Tibial artery (tissue), 4 donors: ENCODE measurements at regions of chr7 and their contacts with region 1.

Region 1: DNA sequence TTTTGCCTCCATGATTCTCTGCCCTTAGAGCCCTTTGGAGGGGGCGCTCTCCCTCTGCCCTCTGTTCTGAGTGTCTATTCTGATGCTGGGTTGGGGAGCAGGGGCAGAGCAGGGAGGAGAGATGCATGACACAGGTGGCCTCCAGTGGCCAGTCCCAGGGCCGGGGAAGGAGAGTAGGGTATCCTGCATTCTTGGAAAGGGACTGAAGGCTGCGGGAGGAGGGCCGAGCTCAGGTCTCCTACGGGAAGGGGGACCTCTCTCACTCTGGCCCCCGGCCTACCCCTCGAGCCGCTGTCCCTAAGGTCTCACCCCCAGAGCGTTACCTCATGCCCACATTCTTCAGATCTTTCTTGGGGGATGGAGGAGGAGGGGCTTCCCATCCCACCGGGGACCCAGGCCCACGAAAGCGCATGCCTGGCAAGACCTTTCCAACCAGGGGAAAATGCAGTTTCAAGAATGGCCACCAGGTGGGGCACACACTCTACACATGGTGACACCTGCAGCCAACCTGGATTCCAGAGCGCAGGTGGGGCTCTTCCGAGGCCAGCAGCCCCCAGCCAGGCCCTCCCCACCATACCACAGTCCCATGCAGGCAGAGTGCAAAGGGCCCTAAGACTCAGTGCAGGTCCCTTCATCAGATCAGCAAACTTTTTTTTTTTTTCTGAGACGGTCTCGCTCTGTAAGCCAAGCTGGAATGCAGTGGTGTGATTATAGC is 86.4 kb downstream of the MYL10 start:
- DNase-seq: peak; percentile 77 to 78
- H3K4me3 ChIP-seq: no peak overlapping the region
- H3K27ac ChIP-seq: no peak overlapping the region
- H3K4me1 ChIP-seq: peaks cover 0 to 9% (median 8%) of the 10 kb centered on the region in 4 donors
- H3K27me3 ChIP-seq: peaks cover 0 to 9% of the 10 kb centered on the region in 2 donors
- CTCF ChIP-seq: peak; percentile 90 to 93

Region 2: DNA sequence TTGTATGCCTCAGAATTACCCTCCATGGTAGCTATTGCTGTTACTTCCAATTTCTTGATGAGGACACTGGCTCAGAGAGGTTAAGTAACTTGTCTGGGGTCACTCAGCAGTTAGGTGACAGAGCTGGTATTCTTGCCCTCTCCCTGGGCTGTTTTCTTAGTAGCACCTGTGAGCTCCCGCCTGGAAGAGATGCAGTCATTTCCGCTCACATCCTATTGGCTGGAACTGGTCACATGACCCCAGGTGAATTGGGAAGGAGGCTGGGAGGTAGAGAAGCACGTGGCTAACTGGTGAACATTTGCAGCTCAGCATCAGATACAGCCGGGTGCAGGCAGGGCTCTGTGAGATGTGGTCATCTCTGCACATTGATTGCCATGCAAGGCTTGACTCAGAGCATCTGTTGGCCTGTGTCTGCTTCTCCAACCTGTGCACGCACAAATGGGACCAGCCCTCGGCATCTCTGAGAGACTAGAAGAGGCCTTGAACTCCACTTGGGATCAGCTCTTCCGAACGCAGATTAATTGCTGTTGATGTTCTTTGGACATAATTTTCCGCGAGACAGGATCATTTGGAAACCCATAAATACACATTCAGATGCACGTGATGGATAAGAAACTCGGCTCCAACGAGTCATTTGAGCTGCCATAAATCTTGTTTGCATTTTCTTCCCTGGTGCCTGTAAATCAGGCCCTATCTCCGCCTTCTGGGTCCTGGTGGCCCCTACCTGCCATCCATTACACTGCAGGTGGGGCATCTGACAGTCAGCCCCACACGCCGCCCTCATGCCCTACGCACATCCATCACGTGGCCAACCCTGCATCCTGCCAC is 43.6 kb after region 1 on chr7:
- intact Hi-C with region 1: no loop called
- DNase-seq: no peak
- H3K4me3 ChIP-seq: no peak overlapping the region
- H3K27ac ChIP-seq: no peak overlapping the region
- H3K4me1 ChIP-seq: no peaks in the 10 kb centered on the region
- H3K27me3 ChIP-seq: peaks cover 0 to 2% of the 10 kb centered on the region in 2 donors
- CTCF ChIP-seq: no peak

Region 3: DNA sequence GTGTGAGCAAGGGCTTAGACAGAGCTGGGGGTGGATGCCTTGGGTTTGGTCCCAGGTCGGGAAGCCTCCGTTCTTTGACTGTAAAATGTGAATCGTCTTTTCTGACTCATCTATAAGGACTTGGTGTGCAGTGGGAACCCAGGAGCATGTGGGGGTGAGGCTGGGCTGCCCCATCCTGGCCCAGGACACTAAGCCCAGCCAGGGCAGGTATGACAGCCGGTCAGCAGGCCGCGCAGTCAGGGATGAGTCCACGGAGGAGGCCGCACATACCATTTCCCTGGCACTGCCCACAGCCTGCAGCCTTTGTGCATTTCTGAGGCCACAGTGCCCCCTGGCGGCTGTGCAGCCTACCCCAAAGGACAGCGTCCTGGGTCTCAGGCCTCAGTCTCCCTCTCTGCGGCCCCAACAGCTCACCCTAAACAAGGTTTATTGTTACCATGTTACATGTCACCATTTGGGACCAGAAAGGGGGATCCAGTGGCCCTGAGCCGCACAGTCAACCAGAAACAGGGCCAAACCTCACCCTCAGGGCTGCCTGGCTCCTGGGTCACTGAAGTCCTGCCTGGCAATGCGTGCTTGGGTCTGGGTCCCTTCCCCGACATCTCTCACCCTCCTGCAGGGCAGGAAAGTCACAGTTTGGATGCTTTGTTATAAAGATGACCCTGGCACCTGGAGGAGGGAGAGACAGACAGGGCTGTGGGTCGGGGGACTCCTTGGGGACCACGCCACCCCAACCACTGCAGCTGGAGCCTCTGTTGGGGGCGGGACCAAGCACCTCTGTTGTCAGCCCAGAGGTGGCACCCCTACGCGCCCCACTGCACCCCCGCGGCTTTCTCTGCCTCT is 729.6 kb after region 1 on chr7:
- intact Hi-C with region 1: loop called (anchors 2 kb)
- DNase-seq: peak; percentile 73 to 84
- H3K4me3 ChIP-seq: no peak overlapping the region
- H3K27ac ChIP-seq: no peak overlapping the region
- H3K4me1 ChIP-seq: peaks cover 0 to 7% (median 5%) of the 10 kb centered on the region in 4 donors
- H3K27me3 ChIP-seq: no peaks in the 10 kb centered on the region
- CTCF ChIP-seq: peak; percentile 81 to 92